Caco-2 (cell line): ENCODE measurements at regions of chr14 and their contacts with region 1.

Region 1: GRCh38 chr14:46596236-46596635 is 55.3 kb downstream of the RPL10L start:
- DNase-seq: no peak
- H3K4me3 ChIP-seq: no peak overlapping the region
- H3K4me3 Mint-ChIP-seq: no peak overlapping the region
- H3K27ac Mint-ChIP-seq: no peak overlapping the region
- H3K4me1 ChIP-seq: peaks cover 12% of the 10 kb centered on the region
- H3K4me1 Mint-ChIP-seq: peaks cover 9% of the 10 kb centered on the region
- H3K27me3 ChIP-seq: no peaks in the 10 kb centered on the region
- H3K27me3 Mint-ChIP-seq: peaks cover 3% of the 10 kb centered on the region
- CTCF ChIP-seq: no peak

Region 2: GRCh38 chr14:46581036-46581671 is 15.1 kb before region 1 on chr14:
- CTCF ChIA-PET with region 1: no interaction called
- POLR2A ChIA-PET with region 1: no interaction called
- intact Hi-C with region 1: no loop called
- DNase-seq: peak; percentile 36 to 46
- H3K4me3 ChIP-seq: no peak overlapping the region
- H3K4me3 Mint-ChIP-seq: no peak overlapping the region
- H3K27ac Mint-ChIP-seq: no peak overlapping the region
- H3K4me1 ChIP-seq: no peaks in the 10 kb centered on the region
- H3K4me1 Mint-ChIP-seq: no peaks in the 10 kb centered on the region
- H3K27me3 ChIP-seq: no peaks in the 10 kb centered on the region
- H3K27me3 Mint-ChIP-seq: no peaks in the 10 kb centered on the region
- CTCF ChIP-seq: peak; percentile 67 to 70

Region 3: DNA sequence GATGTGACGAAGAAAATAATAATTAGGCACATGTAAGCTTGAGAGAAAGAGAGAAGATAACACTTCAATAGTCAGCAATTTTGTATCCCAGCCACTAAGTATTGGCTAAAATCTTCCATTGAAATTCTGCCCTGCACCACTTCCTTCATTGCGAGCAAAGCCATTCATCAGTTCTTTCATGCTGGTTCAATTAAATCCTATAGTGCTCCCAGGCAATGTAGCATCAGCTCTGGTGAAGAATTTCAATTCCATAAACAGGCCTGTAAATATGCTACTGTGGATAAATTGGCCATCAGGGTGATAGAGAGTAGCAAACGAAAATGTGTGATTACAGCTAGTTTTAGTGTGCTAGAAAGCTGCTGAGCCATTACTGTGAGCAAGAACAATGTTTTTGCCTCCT is 30.6 kb after region 1 on chr14:
- CTCF ChIA-PET with region 1: no interaction called
- POLR2A ChIA-PET with region 1: no interaction called
- intact Hi-C with region 1: loop called (anchors 5 kb)
- DNase-seq: no peak
- H3K4me3 ChIP-seq: no peak overlapping the region
- H3K4me3 Mint-ChIP-seq: no peak overlapping the region
- H3K27ac Mint-ChIP-seq: peak overlapping the region; percentile 28
- H3K4me1 ChIP-seq: 0 out of 2 replicates have a peak, but pooled peaks cover 3% of the 10 kb centered on the region
- H3K4me1 Mint-ChIP-seq: peaks cover 13% of the 10 kb centered on the region
- H3K27me3 ChIP-seq: no peaks in the 10 kb centered on the region
- H3K27me3 Mint-ChIP-seq: no peaks in the 10 kb centered on the region
- CTCF ChIP-seq: no peak